ENCODE measurements at regions of chr5 and their contacts with region 1.

Region 1: DNA sequence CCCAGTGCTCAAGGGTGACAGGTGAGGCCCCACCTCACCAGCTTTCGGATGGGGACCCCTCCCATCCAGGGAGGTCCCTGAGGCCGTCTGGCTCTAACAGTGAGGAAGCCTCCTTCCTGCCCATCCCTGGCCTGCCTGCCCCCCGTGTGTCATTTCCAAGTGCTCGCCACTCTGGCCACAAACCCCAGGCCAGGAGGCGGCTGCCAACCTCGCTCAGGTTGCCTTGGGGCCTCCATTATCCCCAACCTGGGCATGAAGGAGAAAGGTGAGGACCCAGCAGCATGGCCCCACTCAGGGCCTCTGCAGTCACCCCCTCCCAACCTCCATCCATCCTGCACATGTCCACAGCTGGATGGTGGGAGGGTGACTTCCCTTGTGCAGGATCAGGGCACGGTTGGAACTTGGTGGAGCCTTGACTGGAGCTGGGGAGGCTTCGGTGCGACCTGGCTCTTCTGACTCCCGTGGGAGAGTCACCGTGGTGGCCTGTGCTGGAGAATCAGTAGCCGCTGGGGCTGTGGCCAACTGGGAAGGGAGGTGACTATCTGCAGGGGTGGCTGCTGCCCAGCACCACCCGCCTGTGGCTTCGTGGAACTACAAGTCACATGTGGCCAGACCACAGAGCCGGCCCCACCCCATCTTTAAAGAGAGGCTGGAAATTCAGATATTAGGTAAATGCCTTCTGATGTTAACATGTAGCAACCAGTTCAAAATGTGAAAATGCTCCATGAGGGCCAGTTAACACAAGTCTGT is 37.5 kb upstream of the GFPT2 start:
- DNase-seq: no peak
- H3K4me3 ChIP-seq: no peak overlapping the region
- H3K27me3 ChIP-seq: no peaks in the 10 kb centered on the region
- CTCF ChIP-seq: no peak

Region 2: GRCh38 chr5:180291943-180292831 is 98.4 kb before region 1 on chr5 and contains the start of gene MAPK9:
- CTCF ChIA-PET with region 1: no interaction called
- POLR2A ChIA-PET with region 1: no interaction called
- DNase-seq: no peak
- H3K4me3 ChIP-seq: peak within 1 kb of the TSS; percentile 70
- H3K27me3 ChIP-seq: no peaks in the 10 kb centered on the region
- CTCF ChIP-seq: no peak
- polyA plus RNA-seq, gene MAPK9: 31.6 and 35.0 TPM in 2 replicates

Region 3: GRCh38 chr5:180360078-180360957 is 30.3 kb before region 1 on chr5:
- CTCF ChIA-PET with region 1: no interaction called
- POLR2A ChIA-PET with region 1: no interaction called
- DNase-seq: no peak
- H3K4me3 ChIP-seq: no peak overlapping the region
- H3K27me3 ChIP-seq: no peaks in the 10 kb centered on the region
- CTCF ChIP-seq: no peak

Region 4: DNA sequence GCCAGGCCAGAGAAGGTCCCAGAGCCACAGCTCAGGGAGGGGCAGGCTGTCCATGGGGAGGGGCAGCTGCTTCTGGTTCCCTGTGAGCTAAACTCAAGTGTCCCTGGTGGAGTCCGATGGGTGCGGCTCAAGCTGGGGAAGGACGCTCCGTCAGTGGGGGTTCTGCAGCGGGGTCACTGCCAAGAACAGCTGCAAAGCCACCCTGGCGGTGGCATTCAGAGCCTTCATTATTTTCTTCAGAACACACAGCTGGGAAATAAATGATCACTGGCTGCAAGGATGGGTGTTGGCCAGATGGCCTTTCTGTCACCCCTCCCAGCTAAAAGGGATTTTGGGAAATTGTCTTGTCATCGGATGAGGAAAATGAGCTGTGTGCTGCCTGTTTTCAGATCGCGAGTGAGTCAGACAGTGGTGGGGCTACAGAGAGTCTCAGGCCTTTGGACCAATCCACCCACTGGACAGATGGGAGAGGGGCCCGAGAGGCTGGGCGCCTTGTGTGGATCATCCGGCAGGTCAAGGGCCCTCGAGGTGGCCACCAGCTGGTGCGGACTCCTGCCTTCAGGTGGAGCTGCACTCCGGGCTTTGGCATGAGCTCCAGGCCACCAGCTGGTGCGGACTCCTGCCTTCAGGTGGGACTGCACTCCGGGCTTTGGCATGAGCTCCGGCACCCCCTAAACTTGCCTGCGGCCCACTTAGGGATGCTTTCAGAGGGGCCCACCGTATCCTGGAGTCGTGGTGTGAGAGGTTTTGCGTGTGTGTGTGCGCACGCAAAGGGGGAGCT is 19.6 kb before region 1 on chr5:
- CTCF ChIA-PET with region 1: no interaction called
- POLR2A ChIA-PET with region 1: interaction called, 13 read pairs
- DNase-seq: no peak
- H3K4me3 ChIP-seq: no peak overlapping the region
- H3K27me3 ChIP-seq: no peaks in the 10 kb centered on the region
- CTCF ChIP-seq: no peak

Measured in BJ (cell line).